PC-9 (cell line): ENCODE measurements at regions of chr2 and their contacts with region 1.

Region 1: GRCh38 chr2:65432227-65433190 is at the start of gene SPRED2:
- DNase-seq: peak; percentile 92
- H3K4me3 ChIP-seq: peak within 1 kb of the TSS; percentile 91
- H3K27ac ChIP-seq: peak within 1 kb of the TSS; percentile 59
- H3K4me1 ChIP-seq: peaks cover 55% of the 10 kb centered on the region
- H3K27me3 ChIP-seq: no peaks in the 10 kb centered on the region
- CTCF ChIP-seq: no peak
- total RNA-seq, gene SPRED2: 33.5 and 33.6 TPM in 2 replicates

Region 2: DNA sequence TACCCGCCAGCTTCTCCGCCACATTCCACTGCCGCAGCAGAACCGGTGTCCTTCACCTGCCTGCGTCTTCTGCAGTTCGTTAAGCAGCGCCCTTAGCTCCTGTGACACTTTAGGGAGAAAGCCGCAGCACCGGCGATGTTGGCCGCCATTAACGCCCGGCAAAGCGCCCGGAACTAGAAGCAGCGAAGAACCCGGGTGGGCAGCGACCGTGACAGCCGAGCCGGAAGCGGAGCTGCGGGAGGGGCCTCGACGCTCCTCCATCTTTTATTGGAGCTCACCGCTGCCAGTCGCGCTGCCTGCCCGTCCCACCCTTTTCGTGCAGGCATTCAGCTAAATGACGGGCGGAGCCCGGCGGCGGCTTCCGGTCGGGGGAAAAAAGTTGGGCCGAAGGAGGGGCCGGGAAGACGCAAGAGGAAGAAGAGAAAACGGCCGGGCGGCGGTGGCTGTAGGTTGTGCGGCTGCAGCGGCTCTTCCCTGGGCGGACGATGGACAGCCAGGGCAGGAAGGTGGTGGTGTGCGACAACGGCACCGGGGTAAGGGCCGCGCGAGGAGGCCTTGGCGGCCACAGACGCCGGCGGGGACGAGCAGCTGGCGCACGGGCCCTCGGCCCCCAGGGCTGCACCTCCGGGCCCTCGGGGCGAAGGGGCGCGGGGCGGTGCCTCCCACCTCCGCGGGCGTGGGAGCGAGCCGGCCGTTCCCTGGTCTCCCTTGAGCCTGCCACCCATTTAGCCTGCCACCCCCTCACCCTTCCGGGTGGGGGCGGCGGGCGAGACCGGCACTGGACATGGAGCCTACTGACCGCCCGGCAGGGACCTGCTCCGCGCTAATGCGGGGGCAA is 204.9 kb before region 1 on chr2 and contains the start of gene ACTR2:
- CTCF ChIA-PET with region 1: interaction called, 10 read pairs
- POLR2A ChIA-PET with region 1: interaction called, 5 read pairs
- intact Hi-C with region 1: no loop called
- DNase-seq: peak; percentile 93 to 97
- H3K4me3 ChIP-seq: peak within 1 kb of the TSS; percentile 80
- H3K27ac ChIP-seq: peak within 1 kb of the TSS; percentile 88
- H3K4me1 ChIP-seq: peaks cover 49% of the 10 kb centered on the region
- H3K27me3 ChIP-seq: no peaks in the 10 kb centered on the region
- CTCF ChIP-seq: no peak
- total RNA-seq, gene ACTR2: 170 and 246 TPM in 2 replicates

Region 3: GRCh38 chr2:65320042-65320725 is 112.3 kb before region 1 on chr2:
- CTCF ChIA-PET with region 1: no interaction called
- POLR2A ChIA-PET with region 1: no interaction called
- intact Hi-C with region 1: loop called (anchors 5 kb)
- DNase-seq: peak; percentile 38 to 96
- H3K4me3 ChIP-seq: peak overlapping the region; percentile 42
- H3K27ac ChIP-seq: peak overlapping the region; percentile 96
- H3K4me1 ChIP-seq: peaks cover 32% of the 10 kb centered on the region
- H3K27me3 ChIP-seq: no peaks in the 10 kb centered on the region
- CTCF ChIP-seq: peak; percentile 65

Region 4: DNA sequence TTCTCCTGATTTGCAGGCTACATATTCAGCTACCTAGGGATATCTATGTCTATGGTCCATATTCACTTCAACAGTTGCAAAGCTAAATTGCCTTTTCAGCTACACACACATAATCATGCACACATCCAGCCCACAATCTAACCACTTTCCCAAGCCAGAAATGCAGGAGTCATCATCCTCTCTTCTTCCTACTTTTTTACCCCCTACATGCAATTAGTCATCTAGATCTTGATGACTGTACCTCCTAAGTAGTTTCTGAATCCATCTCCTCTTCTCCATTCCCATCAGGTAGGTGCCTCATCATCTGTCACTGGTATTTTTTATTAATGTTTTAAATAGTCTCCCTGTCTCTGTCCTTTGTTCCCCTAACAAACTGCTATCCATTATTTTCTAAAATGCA is 23.6 kb after region 1 on chr2:
- CTCF ChIA-PET with region 1: no interaction called
- POLR2A ChIA-PET with region 1: interaction called, 3 read pairs
- intact Hi-C with region 1: loop called (anchors 1 kb)
- DNase-seq: peak in 1 of 2 experiments; percentile 65
- H3K4me3 ChIP-seq: no peak overlapping the region
- H3K27ac ChIP-seq: no peak overlapping the region
- H3K4me1 ChIP-seq: peaks cover 69% of the 10 kb centered on the region
- H3K27me3 ChIP-seq: no peaks in the 10 kb centered on the region
- CTCF ChIP-seq: no peak

Region 5: DNA sequence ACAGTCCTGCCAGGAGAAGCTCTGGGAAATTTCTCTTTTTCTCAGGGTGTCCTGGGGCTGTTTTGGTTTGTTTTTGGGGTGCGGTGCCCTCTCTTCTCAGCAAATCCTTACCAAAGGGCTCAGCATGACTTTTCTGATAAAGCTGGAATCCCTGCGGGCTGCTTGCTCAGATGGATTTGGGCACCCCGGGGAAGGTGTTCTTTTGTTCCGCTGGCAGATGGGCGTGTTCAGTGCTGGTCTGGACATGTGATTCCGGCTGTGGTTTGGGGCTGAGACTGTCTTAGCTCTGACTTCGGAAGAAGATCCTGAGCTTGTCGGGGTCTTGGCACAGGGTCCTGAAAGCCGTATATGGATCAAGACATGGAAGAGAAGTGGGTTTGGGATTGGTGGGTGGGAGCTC is 134.1 kb after region 1 on chr2:
- CTCF ChIA-PET with region 1: no interaction called
- POLR2A ChIA-PET with region 1: interaction called, 5 read pairs
- intact Hi-C with region 1: loop called (anchors 5 kb)
- DNase-seq: peak; percentile 21 to 54
- H3K4me3 ChIP-seq: peak overlapping the region; percentile 24; the same call in 1 of the 2 replicates
- H3K27ac ChIP-seq: 0 out of 2 replicates have a peak overlapping the region, but pooled peaks have one; percentile 31
- H3K4me1 ChIP-seq: peaks cover 10% of the 10 kb centered on the region; the same call in 1 of the 2 replicates
- H3K27me3 ChIP-seq: no peaks in the 10 kb centered on the region
- CTCF ChIP-seq: no peak